PC-3 (cell line): ENCODE measurements at regions of chr1 and their contacts with region 1.

Region 1: GRCh38 chr1:164602480-164603093 is 43.6 kb downstream of the PBX1 start:
- DNase-seq: peak; percentile 37
- ATAC-seq: peak; percentile 45
- H3K4me3 ChIP-seq: peak overlapping the region; percentile 37
- H3K27ac ChIP-seq: no peak overlapping the region
- H3K4me1 ChIP-seq: peaks cover 33% of the 10 kb centered on the region
- H3K27me3 ChIP-seq: no peaks in the 10 kb centered on the region
- CTCF ChIP-seq: no peak

Region 2: DNA sequence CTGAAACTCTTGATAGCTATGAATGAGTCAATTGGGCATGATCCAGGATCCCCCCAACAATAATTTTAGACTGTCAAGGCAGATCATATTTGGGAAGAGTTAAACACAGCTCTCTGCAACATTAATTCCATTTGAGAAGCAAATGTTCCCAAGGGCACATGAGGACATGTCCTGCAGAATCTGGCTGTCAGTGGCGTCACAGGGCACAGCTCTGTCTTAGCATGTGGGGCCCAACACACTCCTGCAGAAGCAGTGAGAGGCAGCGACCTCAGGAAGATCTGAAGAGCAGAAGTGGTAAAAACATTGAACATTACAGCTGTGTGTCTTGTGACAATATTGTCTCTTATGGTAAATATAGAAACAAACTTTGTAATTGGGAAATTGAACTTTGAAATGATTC is 240.7 kb before region 1 on chr1:
- CTCF ChIA-PET with region 1: no interaction called
- POLR2A ChIA-PET with region 1: no interaction called
- intact Hi-C with region 1: no loop called
- DNase-seq: no peak
- ATAC-seq: no peak
- H3K4me3 ChIP-seq: no peak overlapping the region
- H3K27ac ChIP-seq: no peak overlapping the region
- H3K4me1 ChIP-seq: no peaks in the 10 kb centered on the region
- H3K27me3 ChIP-seq: peaks cover 11% of the 10 kb centered on the region; the same call in 1 of the 2 replicates
- CTCF ChIP-seq: no peak

Region 3: DNA sequence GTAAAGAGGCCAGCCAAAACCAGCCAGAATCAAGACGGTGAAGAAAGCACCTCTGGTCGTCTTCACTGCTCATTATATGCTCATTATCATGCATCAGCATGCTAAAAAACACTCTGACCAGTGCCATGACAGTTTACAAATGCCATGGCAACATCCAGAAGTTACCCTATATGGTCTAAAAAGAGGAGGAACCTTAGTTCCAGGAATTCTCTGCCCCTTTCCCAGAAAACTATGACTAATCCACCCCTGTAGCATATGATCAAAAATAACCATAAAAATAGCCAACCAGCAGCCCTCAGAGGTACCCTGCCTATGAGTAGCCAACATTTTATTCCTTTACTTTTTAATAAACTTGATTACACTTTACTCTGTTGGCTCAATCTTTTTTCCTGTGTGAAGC is 77.8 kb before region 1 on chr1:
- CTCF ChIA-PET with region 1: no interaction called
- POLR2A ChIA-PET with region 1: no interaction called
- intact Hi-C with region 1: no loop called
- DNase-seq: no peak
- ATAC-seq: no peak
- H3K4me3 ChIP-seq: no peak overlapping the region
- H3K27ac ChIP-seq: no peak overlapping the region
- H3K4me1 ChIP-seq: no peaks in the 10 kb centered on the region
- H3K27me3 ChIP-seq: peaks cover 15% of the 10 kb centered on the region; the same call in 1 of the 2 replicates
- CTCF ChIP-seq: no peak

Region 4: DNA sequence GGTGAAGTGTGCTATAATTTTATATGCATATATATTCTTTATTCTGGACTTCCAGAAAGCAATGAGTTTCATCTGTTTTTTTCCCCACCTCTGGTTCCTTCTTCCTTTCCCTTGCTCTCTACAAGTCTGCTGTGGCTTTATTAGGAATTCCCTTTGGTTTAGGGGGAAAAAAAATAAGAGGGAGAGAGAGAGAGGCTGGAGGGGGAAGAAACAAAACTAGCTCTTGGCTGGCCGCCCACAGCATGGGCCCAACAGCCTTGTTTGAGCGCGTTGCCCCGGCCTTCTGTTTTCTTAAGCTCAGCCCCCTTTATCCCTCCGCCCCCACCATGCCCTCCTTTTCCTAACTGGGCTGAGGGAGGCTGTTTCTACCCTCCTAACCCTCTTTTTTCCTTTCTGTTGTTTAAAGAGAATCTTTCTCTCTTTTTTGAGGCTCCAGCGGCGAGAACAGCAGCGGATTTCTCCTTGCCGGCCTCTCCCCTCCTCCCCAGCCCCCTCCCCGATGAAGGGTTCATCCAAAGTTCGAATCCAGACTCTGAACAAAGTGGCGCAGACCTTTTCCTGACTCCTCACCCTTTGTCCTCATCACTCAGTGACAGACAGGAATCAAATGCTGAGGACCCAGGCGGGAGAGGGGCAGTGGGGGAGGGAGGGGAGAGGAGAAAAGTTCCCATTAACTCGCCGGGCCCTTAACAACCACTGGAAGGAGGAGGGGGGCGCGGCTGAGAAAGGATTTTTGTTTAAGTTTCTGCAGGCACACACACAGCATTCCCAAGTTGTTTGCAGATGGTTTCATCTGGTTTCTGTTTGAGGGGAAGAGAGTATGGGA is 13.9 kb before region 1 on chr1:
- CTCF ChIA-PET with region 1: no interaction called
- POLR2A ChIA-PET with region 1: no interaction called
- intact Hi-C with region 1: no loop called
- DNase-seq: no peak
- ATAC-seq: no peak
- H3K4me3 ChIP-seq: no peak overlapping the region
- H3K27ac ChIP-seq: no peak overlapping the region
- H3K4me1 ChIP-seq: no peaks in the 10 kb centered on the region; the same call in 1 of the 2 replicates
- H3K27me3 ChIP-seq: no peaks in the 10 kb centered on the region
- CTCF ChIP-seq: no peak

Region 5: GRCh38 chr1:164671323-164671965 is 68.9 kb after region 1 on chr1:
- CTCF ChIA-PET with region 1: no interaction called
- POLR2A ChIA-PET with region 1: no interaction called
- intact Hi-C with region 1: no loop called
- DNase-seq: no peak
- ATAC-seq: no peak
- H3K4me3 ChIP-seq: no peak overlapping the region
- H3K27ac ChIP-seq: no peak overlapping the region
- H3K4me1 ChIP-seq: peaks cover 14% of the 10 kb centered on the region
- H3K27me3 ChIP-seq: no peaks in the 10 kb centered on the region
- CTCF ChIP-seq: no peak

Region 6: DNA sequence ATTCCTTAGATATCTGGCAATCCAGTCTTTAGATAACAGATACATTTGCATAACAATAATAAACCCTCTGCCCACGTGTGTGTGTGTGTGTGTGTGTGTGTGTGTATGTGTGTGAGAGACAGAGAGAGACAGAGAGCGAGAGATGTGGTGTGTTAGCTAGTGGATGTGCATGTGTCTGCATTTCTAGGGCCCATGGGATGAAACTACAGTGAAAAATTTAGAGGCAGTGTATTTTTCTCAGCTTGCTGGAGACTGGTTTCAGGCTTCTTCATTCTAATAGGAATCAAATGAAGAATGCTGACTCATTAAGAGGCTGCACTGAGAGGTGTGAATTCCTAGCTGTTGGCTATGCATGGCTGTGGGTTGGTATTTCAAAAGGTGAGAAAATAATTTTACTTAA is 450.8 kb after region 1 on chr1:
- CTCF ChIA-PET with region 1: interaction called, 13 read pairs
- POLR2A ChIA-PET with region 1: no interaction called
- intact Hi-C with region 1: no loop called
- DNase-seq: no peak
- ATAC-seq: no peak
- H3K4me3 ChIP-seq: no peak overlapping the region
- H3K27ac ChIP-seq: no peak overlapping the region
- H3K4me1 ChIP-seq: no peaks in the 10 kb centered on the region
- H3K27me3 ChIP-seq: peaks cover 72% of the 10 kb centered on the region
- CTCF ChIP-seq: no peak